Lower leg skin (tissue), 4 donors: ENCODE measurements at regions of chr12 and their contacts with region 1.

Region 1: GRCh38 chr12:57058454-57058853 is 8.5 kb upstream of the MYO1A start:
- DNase-seq: no peak
- H3K4me3 ChIP-seq: no peak overlapping the region
- CTCF ChIP-seq: no peak
- POLR2A ChIP-seq: no peak

Region 2: DNA sequence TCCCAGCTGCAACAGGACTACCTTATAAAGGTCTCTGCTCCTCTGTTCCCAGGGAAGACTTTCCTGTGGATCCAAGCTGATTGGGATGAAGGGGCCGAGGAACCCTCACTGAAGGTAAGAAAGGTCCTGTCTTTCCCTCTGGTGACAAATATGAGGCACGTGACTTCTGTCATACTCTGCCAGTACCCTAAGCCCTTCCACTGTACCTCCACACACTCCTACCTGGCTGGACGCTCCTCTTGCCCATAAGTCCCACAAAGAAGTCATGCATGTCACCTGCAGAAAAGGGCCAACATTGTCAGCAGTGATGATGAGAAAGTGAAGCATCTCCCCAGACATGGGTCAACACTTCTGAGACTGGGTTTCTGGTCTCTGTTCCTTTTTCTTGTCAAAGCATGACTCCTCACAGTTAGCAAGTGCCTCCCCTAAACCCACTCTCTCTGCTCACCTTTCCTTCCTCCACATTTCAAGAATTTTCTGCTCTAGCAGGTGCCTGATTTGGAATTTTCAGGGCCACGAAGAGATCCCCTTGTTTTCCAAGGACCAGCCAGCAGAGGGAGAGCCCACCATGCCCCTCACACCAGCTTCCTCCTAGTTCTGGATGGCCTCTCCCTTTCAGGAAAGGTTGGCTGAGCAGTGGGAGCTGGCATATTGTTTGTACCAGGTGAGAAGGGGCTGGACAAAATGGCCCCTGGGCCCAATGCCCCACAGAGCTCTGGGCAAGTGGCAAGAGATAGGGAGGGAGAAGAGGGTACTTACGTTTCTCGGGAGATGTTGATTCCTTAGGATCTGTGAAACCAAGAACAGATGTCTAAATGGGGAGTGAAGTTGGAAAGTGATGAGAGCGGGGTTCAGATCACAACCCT is 45.6 kb before region 1 on chr12:
- intact Hi-C with region 1: loop called (anchors 5 kb)
- DNase-seq: no peak
- H3K4me3 ChIP-seq: no peak overlapping the region
- CTCF ChIP-seq: no peak
- POLR2A ChIP-seq: no peak

Region 3: GRCh38 chr12:57027011-57027804 is 31.2 kb before region 1 on chr12:
- intact Hi-C with region 1: no loop called
- DNase-seq: no peak
- H3K4me3 ChIP-seq: no peak overlapping the region
- CTCF ChIP-seq: no peak
- POLR2A ChIP-seq: no peak

Region 4: GRCh38 chr12:57261428-57261865 is 203.0 kb after region 1 on chr12:
- intact Hi-C with region 1: no loop called
- DNase-seq: no peak
- H3K4me3 ChIP-seq: no peak overlapping the region
- CTCF ChIP-seq: no peak
- POLR2A ChIP-seq: no peak

Region 5: DNA sequence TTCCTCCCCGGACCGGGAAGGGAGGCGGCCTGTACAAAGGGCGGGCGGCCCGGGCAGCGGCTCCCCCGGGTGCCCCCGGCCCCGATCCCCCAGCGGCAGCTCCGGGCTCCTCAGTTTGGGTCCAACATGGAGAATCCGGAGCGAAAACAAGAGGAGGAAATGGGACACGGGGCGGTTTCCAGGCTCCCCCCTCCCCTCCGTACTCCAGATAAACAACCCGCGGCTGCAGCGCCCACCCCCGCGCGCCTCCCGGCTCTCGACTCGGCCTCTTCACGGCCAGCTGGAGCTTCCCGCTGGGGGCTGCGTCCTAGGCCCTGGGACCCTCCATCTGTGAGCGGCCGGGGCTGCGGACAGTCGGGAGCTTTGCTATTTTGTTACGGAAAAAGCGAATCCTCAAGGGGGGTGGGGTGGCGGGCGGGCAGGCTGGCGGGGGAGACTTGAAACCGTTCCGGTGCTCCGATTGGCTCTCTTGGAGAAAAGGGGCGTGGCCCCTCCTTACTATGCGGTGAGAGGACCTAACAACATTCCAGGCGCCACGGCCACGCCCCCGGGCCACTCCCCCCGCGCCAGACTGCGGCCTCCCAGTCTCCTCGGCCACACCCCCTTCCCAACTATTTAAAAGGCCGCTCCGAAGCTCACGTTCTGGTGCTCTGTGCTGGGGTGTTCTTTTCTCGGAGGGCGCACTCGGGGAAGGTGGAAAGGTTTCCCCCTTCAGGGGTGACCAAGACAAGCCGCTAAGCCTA is 788.3 kb after region 1 on chr12 and contains the start of gene CTDSP2:
- intact Hi-C with region 1: no loop called
- DNase-seq: peak; percentile 100
- H3K4me3 ChIP-seq: peak within 1 kb of the TSS; percentile 98
- CTCF ChIP-seq: no peak
- POLR2A ChIP-seq: peak in 1 of 2 donors; percentile 32
- total RNA-seq, gene CTDSP2: 129 to 174 (median 169) TPM